ENCODE measurements at regions of chr2 and their contacts with region 1.

Region 1: GRCh38 chr2:152635635-152636298 is 81.5 kb downstream of the PRPF40A start:
- DNase-seq: peak; percentile 35 to 60
- H3K4me3 ChIP-seq: no peak overlapping the region
- H3K27ac ChIP-seq: no peak overlapping the region
- H3K4me1 ChIP-seq: no peaks in the 10 kb centered on the region
- H3K27me3 ChIP-seq: no peaks in the 10 kb centered on the region
- CTCF ChIP-seq: peak; percentile 68 to 81 (median 70)
- POLR2A ChIP-seq: no peak

Region 2: GRCh38 chr2:152183401-152184073 is 452.2 kb before region 1 on chr2:
- intact Hi-C with region 1: loop called (anchors 5 kb)
- DNase-seq: no peak
- H3K4me3 ChIP-seq: no peak overlapping the region
- H3K27ac ChIP-seq: no peak overlapping the region
- H3K4me1 ChIP-seq: no peaks in the 10 kb centered on the region
- H3K27me3 ChIP-seq: no peaks in the 10 kb centered on the region
- CTCF ChIP-seq: no peak
- POLR2A ChIP-seq: no peak

Region 3: DNA sequence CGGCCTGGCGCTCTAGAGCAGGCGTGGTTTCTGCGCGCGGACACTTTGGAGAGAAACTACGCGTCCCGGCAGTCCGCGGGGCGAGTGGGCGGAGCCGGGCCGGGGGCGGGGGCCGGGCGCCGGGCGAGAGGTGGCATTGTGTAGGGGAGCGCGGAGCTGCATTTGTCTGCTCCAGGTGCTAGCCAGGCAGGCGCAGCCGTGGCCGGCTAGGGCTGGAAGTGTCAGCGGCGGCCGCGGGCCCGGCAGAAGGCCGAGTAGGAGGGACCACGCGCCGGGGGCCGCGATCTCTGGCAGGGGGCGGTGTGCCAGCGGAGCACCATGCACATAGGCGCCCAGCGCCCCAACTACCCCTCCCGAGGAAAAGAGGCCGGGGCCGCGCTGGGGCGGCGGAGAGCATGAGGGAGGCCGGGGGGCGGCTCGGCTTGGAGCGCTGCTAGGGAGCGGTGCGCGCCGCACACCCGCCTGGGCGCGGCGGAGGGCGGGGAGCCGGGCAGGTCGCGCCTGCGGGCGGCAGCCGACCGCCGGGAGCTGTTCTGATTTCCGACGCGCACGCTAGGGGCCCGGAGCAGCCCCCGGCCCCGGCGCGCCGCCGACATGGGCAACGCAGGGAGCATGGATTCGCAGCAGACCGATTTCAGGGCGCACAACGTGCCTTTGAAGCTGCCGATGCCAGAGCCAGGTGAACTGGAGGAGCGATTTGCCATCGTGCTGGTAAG is 300.6 kb before region 1 on chr2 and contains the start of gene FMNL2:
- intact Hi-C with region 1: loop called (anchors 10 kb)
- DNase-seq: peak; percentile 83 to 86
- H3K4me3 ChIP-seq: peak within 1 kb of the TSS; percentile 54 to 97
- H3K27ac ChIP-seq: peak within 1 kb of the TSS; percentile 86 to 87
- H3K4me1 ChIP-seq: no peaks in the 10 kb centered on the region
- H3K27me3 ChIP-seq: no peaks in the 10 kb centered on the region
- CTCF ChIP-seq: peak in 1 of 4 experiments; percentile 23
- POLR2A ChIP-seq: peak; percentile 76 to 77
- total RNA-seq, gene FMNL2: 10.0 to 66.9 (median 33.4) TPM

Region 4: GRCh38 chr2:152573168-152573567 is 62.6 kb before region 1 on chr2:
- intact Hi-C with region 1: no loop called
- DNase-seq: no peak
- H3K4me3 ChIP-seq: no peak overlapping the region
- H3K27ac ChIP-seq: no peak overlapping the region
- H3K4me1 ChIP-seq: peaks cover 3% of the 10 kb centered on the region in 2 donors
- H3K27me3 ChIP-seq: no peaks in the 10 kb centered on the region
- CTCF ChIP-seq: no peak
- POLR2A ChIP-seq: no peak

Region 5: GRCh38 chr2:152657043-152657442 is 21.3 kb after region 1 on chr2:
- intact Hi-C with region 1: no loop called
- DNase-seq: no peak
- H3K4me3 ChIP-seq: no peak overlapping the region
- H3K27ac ChIP-seq: no peak overlapping the region
- H3K4me1 ChIP-seq: no peaks in the 10 kb centered on the region
- H3K27me3 ChIP-seq: no peaks in the 10 kb centered on the region
- CTCF ChIP-seq: no peak
- POLR2A ChIP-seq: no peak